Endothelial cell of umbilical vein (primary cell): ENCODE measurements at regions of chr17 and their contacts with region 1.

Region 1: GRCh38 chr17:67717624-67718329 is at the start of gene NOL11:
- DNase-seq: peak; percentile 100
- H3K4me3 ChIP-seq: peak within 1 kb of the TSS; percentile 70 to 90 (median 81)
- H3K27ac ChIP-seq: peak within 1 kb of the TSS; percentile 74
- H3K4me1 ChIP-seq: peaks cover 16% of the 10 kb centered on the region
- H3K27me3 ChIP-seq: no peaks in the 10 kb centered on the region
- CTCF ChIP-seq: peak; percentile 96 to 97
- POLR2A ChIP-seq: peak; percentile 97
- total RNA-seq, gene NOL11: 50.7 and 52.6 TPM in 2 replicates

Region 2: GRCh38 chr17:67528751-67529436 is 188.9 kb before region 1 on chr17:
- CTCF ChIA-PET with region 1: no interaction called
- POLR2A ChIA-PET with region 1: no interaction called
- dilution Hi-C with region 1: no loop called
- intact Hi-C with region 1: loop called (anchors 1 kb)
- DNase-seq: peak; percentile 94
- H3K4me3 ChIP-seq: peak overlapping the region in 2 of 3 experiments; percentile 9 to 38
- H3K27ac ChIP-seq: peak overlapping the region; percentile 88
- H3K4me1 ChIP-seq: peaks cover 11% of the 10 kb centered on the region
- H3K27me3 ChIP-seq: no peaks in the 10 kb centered on the region
- CTCF ChIP-seq: no peak
- POLR2A ChIP-seq: no peak

Region 3: DNA sequence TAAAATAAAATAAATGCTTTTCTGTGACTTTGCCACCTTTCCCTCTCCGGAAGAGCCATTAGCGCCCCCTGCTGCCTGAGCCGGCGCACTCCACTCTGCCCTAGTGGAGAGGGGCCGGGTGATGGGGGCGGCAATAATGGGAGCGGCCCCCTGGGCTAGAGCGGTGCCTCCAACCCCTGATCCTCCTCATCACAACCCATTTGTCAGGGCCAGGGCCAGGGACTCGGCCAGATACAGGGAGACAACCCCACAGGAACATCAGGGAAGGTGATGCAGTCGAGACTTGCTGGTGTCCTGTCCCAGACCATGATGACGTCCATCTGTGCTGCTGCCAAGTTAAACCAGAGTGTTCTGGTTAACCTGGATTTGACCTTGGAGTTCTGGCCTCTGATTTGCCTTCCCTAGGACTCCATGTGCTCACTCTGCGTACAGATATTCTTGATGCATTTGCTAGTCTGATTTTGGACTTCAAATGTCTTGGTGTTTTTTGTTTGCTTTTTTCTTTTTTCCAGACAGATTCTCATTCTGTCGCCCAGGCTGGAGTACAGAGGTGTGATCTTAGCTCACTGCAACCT is 61.4 kb after region 1 on chr17:
- CTCF ChIA-PET with region 1: no interaction called
- POLR2A ChIA-PET with region 1: no interaction called
- dilution Hi-C with region 1: no loop called
- intact Hi-C with region 1: loop called (anchors 1 kb)
- DNase-seq: peak; percentile 33
- H3K4me3 ChIP-seq: no peak overlapping the region
- H3K27ac ChIP-seq: no peak overlapping the region
- H3K4me1 ChIP-seq: peaks cover 3% of the 10 kb centered on the region
- H3K27me3 ChIP-seq: no peaks in the 10 kb centered on the region
- CTCF ChIP-seq: peak; percentile 66 to 73
- POLR2A ChIP-seq: no peak

Region 4: GRCh38 chr17:67824735-67825626 is 107.2 kb after region 1 on chr17 and contains the start of gene BPTF:
- CTCF ChIA-PET with region 1: interaction called, 3 read pairs
- POLR2A ChIA-PET with region 1: no interaction called
- dilution Hi-C with region 1: no loop called
- intact Hi-C with region 1: loop called (anchors 1 kb)
- DNase-seq: peak; percentile 89
- H3K4me3 ChIP-seq: peak within 1 kb of the TSS; percentile 60 to 83 (median 78)
- H3K27ac ChIP-seq: no peak within 1 kb of the TSS
- H3K4me1 ChIP-seq: peaks cover 13% of the 10 kb centered on the region
- H3K27me3 ChIP-seq: no peaks in the 10 kb centered on the region
- CTCF ChIP-seq: peak; percentile 91 to 98
- POLR2A ChIP-seq: peak; percentile 71
- total RNA-seq, gene BPTF: 78.6 and 88.1 TPM in 2 replicates